Activated B cell treated with CpG ODN at 0.5 μM for 24 hours (primary cell): ENCODE measurements at regions of chr1 and their contacts with region 1.

Region 1: GRCh38 chr1:212566522-212567479 is 41.8 kb upstream of the ATF3 start:
- DNase-seq: no peak
- ATAC-seq: peak; percentile 98
- H3K4me3 Mint-ChIP-seq: peak overlapping the region; percentile 88
- H3K27ac Mint-ChIP-seq: peak overlapping the region; percentile 86
- H3K4me1 Mint-ChIP-seq: peaks cover 34% of the 10 kb centered on the region
- H3K27me3 Mint-ChIP-seq: no peaks in the 10 kb centered on the region
- CTCF ChIP-seq: no peak

Region 2: GRCh38 chr1:212586206-212587015 is 19.6 kb after region 1 on chr1:
- CTCF ChIA-PET with region 1: interaction called, 3 read pairs
- POLR2A ChIA-PET with region 1: interaction called, 18 read pairs
- intact Hi-C with region 1: loop called (anchors 1 kb)
- DNase-seq: no peak
- ATAC-seq: peak; percentile 93
- H3K4me3 Mint-ChIP-seq: no peak overlapping the region
- H3K27ac Mint-ChIP-seq: peak overlapping the region; percentile 1
- H3K4me1 Mint-ChIP-seq: peaks cover 12% of the 10 kb centered on the region
- H3K27me3 Mint-ChIP-seq: peaks cover 53% of the 10 kb centered on the region
- CTCF ChIP-seq: no peak

Region 3: DNA sequence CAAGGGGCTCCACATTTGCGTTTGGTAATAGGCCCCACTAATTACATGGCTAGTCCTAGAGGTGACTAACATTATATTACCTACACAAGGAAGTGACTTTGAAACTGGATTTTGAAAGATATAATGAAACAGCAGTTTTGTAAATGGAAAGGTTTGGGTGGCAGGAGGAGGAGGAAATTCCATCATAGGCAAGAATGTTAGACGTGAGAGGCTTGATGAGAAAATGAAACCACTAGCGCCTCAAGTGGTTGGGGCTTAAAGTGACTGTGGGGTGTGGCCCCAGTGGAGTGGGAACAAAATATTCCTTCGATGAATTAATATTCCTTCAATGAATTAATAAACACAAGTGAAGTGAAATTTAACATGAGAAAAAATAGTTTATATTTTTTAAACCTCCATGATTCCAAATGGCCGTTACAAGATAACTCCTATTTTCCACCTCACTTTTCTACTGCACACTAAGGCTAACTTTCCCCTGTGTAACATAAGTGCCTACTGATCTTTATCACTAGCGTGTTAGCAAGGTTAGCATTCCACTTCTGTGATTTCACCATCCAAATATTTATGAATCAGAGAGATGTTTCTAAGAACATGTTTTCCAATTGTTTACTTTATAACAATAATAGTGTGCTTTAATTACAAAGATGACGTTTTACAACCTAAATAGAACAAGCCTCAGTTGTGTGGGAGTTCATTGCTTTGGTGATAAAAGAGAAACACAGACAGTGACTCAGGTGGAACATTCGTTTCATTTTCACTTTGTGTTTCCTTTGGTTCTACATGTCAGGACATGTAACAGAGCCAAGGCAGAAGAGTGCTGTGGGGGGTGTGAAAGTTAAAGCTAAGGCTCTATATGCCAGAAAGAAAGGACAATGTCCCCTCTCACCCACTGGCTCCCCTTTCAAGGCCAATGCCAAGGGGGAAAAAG is 29.2 kb after region 1 on chr1:
- CTCF ChIA-PET with region 1: no interaction called
- POLR2A ChIA-PET with region 1: interaction called, 4 read pairs
- intact Hi-C with region 1: loop called (anchors 1 kb)
- DNase-seq: no peak
- ATAC-seq: peak; percentile 90
- H3K4me3 Mint-ChIP-seq: peak overlapping the region; percentile 72
- H3K27ac Mint-ChIP-seq: peak overlapping the region; percentile 84
- H3K4me1 Mint-ChIP-seq: peaks cover 16% of the 10 kb centered on the region
- H3K27me3 Mint-ChIP-seq: peaks cover 20% of the 10 kb centered on the region
- CTCF ChIP-seq: no peak

Region 4: DNA sequence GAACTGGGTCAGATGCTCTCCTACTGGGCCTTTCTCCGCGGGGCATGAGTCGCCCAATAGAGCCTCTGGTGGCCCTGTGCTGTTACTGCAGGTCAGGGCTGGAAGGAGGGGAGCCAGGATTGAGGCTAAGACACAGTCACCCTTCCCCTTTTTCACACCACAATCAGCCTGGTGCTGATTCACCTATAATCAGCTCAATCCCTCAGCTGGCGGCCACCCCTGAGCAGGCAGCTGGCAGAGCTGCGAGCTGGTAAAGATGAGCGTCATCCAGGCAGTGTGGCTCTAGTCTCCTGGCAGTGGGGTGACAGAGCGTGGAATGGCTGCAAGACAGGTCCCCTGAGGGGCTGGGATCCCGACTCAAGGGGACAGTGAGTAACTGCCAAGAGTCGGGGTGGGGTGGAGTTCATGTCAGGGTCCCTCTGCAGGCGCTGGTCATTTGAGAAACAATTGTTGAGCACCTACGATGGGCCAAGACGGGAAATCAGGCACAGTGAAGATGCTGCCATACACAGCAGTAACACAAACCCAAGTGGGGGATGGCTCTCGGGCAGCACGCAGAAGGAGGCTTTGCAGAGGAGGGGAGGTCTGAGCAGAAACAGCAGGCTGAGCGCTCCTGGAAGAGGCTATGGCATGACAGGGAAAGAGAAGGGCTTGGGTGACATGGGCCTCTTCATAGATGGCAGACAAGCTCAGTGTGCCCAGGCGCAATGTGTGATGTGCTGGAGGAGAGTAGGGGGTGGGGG is 63.5 kb after region 1 on chr1:
- CTCF ChIA-PET with region 1: no interaction called
- POLR2A ChIA-PET with region 1: interaction called, 7 read pairs
- intact Hi-C with region 1: loop called (anchors 2 kb)
- DNase-seq: peak; percentile 58
- ATAC-seq: peak; percentile 98
- H3K4me3 Mint-ChIP-seq: no peak overlapping the region
- H3K27ac Mint-ChIP-seq: no peak overlapping the region
- H3K4me1 Mint-ChIP-seq: peaks cover 19% of the 10 kb centered on the region
- H3K27me3 Mint-ChIP-seq: peaks cover 12% of the 10 kb centered on the region
- CTCF ChIP-seq: peak; percentile 76